ENCODE measurements at regions of chr3 and their contacts with region 1.

Region 1: GRCh38 chr3:66816090-66816761 is 181.9 kb upstream of the KBTBD8 start:
- DNase-seq: no peak
- H3K4me3 ChIP-seq: no peak overlapping the region
- H3K27ac ChIP-seq: no peak overlapping the region
- H3K4me1 ChIP-seq: no peaks in the 10 kb centered on the region
- H3K27me3 ChIP-seq: peaks cover 4% of the 10 kb centered on the region
- CTCF ChIP-seq: peak; percentile 42 to 67 (median 62)
- POLR2A ChIP-seq: no peak

Region 2: GRCh38 chr3:66276705-66277274 is 539.4 kb before region 1 on chr3:
- intact Hi-C with region 1: loop called (anchors 5 kb)
- DNase-seq: peak; percentile 32 to 84 (median 66)
- H3K4me3 ChIP-seq: no peak overlapping the region
- H3K27ac ChIP-seq: no peak overlapping the region
- H3K4me1 ChIP-seq: no peaks in the 10 kb centered on the region
- H3K27me3 ChIP-seq: no peaks in the 10 kb centered on the region
- CTCF ChIP-seq: peak; percentile 39 to 75 (median 71)
- POLR2A ChIP-seq: no peak

Region 3: GRCh38 chr3:66407611-66408218 is 408.5 kb before region 1 on chr3:
- intact Hi-C with region 1: loop called (anchors 2 to 10 kb)
- DNase-seq: peak; percentile 41 to 85 (median 66)
- H3K4me3 ChIP-seq: no peak overlapping the region
- H3K27ac ChIP-seq: no peak overlapping the region
- H3K4me1 ChIP-seq: no peaks in the 10 kb centered on the region
- H3K27me3 ChIP-seq: no peaks in the 10 kb centered on the region
- CTCF ChIP-seq: peak; percentile 72 to 91 (median 84)
- POLR2A ChIP-seq: no peak

Region 4: DNA sequence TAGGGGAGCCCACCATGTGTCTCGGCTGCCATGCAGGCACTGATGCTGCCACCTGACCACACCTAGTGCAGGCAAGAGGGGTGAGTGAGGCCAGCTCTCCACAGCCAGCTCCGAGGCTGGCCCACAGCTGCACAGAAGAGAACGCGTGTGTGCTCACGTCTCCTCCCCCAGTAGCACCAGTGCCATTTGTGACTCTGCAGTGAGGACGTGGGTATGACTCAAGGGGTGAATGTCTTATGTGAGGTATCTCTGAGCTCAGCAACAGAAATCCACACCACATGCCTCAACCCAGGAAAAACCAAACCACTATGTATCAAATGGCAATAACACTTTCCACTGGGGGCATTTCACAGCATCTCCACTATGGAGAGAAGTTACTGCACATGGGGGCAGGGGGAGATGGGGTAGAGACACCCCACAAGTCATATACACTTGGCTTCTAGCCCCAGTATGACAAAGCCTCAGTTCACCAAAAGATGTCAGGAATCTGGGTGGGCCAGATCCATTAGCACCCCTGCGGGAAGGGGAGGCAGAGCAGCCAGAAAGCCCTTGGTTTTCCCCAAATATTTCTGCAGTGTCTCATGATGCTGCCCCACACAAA is 403.0 kb before region 1 on chr3:
- intact Hi-C with region 1: loop called (anchors 2 to 10 kb)
- DNase-seq: no peak
- H3K4me3 ChIP-seq: no peak overlapping the region
- H3K27ac ChIP-seq: no peak overlapping the region
- H3K4me1 ChIP-seq: no peaks in the 10 kb centered on the region
- H3K27me3 ChIP-seq: no peaks in the 10 kb centered on the region
- CTCF ChIP-seq: no peak
- POLR2A ChIP-seq: no peak

Region 5: DNA sequence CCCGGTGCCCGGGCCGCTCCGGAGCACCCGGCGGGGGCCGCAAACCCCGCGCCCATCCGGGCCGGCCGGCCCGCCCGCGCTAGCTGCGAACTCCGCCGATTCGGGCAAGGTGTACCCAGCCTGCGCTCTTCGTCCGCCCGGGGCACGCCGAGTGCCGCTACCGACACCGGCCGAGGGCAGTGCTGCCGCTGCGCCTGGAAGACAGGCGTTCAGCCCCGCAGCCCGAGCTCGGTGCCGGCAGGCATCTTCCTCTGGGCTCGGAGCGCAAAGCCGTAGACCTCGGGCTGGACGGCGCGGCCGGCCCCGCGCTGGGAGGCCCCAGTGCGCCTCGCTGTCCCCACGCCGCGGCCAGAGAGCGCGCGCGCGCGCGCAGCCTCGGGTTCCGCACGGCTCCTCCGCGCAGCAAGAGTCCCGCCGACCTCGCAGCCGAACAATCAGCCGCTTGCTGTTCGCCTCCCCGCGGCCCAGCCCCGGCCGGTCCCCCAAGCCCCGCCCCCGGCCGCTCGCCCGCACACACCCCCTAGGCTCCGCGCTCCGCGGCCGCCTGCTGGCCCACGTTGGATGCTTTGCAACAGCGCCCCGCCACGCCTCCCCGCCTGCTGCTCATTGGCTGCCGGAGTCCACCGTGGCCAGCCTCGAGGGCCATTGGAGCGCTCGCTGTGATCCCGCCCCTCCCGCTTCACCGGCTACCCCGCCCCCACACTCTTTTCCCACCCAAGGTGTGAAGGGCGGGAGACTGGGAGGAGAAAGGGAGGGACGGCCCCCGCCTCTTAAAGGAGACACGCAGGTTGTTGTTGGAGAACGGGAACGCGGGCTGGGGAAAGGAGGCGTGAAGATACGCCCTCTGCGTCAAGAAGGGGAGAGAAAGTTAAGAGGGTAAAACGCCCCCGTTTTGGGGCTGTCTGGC is 315.4 kb before region 1 on chr3 and contains the start of gene LRIG1:
- intact Hi-C with region 1: loop called in 1 of 2 experiments (anchors 10 kb)
- DNase-seq: peak; percentile 99 to 100 (median 99)
- H3K4me3 ChIP-seq: peak within 1 kb of the TSS; percentile 53 to 94 (median 72)
- H3K27ac ChIP-seq: peak within 1 kb of the TSS in 4 of 5 donors; percentile 29 to 83 (median 66)
- H3K4me1 ChIP-seq: peaks cover 0 to 12% of the 10 kb centered on the region in 2 donors
- H3K27me3 ChIP-seq: no peaks in the 10 kb centered on the region
- CTCF ChIP-seq: peak; percentile 14 to 61 (median 44)
- POLR2A ChIP-seq: peak in 1 of 2 donors; percentile 55
- total RNA-seq, gene LRIG1: 1.5 to 13.3 (median 5.3) TPM

Measured in adrenal gland (tissue), 19 donors.